Lower lobe of right lung (tissue), 2 donors: ENCODE measurements at regions of chr7 and their contacts with region 1.

Region 1: DNA sequence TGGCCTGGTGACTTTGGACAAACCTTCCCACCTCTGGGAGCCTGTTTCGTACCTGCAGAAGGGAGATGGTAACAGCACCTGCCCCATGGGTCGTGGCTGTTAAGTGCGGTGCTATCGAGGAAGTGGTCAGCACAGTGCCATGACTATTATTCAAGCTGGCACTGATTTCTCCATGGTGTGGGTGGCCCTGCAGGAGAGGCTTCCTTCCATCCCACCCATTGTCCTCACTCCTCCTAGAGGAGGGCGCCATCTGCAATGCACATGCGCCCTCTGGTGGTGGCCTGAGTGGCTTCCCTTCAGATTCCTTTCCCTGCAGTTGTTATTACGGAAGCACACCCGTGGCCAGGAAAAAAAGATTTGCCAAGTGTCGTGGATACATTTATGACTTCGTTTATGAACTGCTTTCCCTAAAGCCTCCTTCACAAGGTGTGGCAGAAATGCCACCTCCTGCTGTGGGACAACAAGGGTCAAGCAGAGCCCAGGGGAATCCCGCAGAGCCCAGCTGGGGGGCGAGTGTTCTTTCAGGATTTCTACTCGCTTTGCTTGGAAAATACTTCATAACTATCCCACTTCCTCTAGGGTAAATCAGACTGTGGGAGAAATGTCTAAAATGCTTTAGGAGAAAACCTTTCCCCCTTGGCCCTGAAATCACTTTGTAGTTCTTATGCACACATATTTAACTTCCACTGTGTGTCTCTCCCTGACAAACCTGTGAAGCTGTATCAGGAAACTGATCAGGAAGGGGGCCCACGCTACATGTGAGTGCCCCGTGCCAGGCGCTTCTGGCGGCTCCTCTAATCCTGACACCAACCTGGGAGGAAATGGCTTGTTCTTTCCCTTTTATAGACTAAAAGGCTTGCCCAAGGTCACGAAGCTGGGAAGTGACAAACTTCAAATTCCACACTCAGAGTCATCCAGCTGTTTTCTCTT is 98.0 kb upstream of the ANLN start:
- DNase-seq: peak; percentile 86
- ATAC-seq: peak; percentile 93 to 94
- H3K4me3 ChIP-seq: peak overlapping the region; percentile 42
- H3K27ac ChIP-seq: peak overlapping the region; percentile 85
- H3K4me1 ChIP-seq: peaks cover 37% of the 10 kb centered on the region
- H3K27me3 ChIP-seq: no peaks in the 10 kb centered on the region
- CTCF ChIP-seq: peak; percentile 96

Region 2: GRCh38 chr7:35985126-35985754 is 306.4 kb before region 1 on chr7:
- intact Hi-C with region 1: loop called (anchors 5 kb)
- DNase-seq: peak; percentile 86
- ATAC-seq: peak; percentile 91 to 94
- H3K4me3 ChIP-seq: no peak overlapping the region
- H3K27ac ChIP-seq: no peak overlapping the region
- H3K4me1 ChIP-seq: no peaks in the 10 kb centered on the region
- H3K27me3 ChIP-seq: no peaks in the 10 kb centered on the region
- CTCF ChIP-seq: peak; percentile 93